ENCODE measurements at regions of chr4 and their contacts with region 1.

Region 1: DNA sequence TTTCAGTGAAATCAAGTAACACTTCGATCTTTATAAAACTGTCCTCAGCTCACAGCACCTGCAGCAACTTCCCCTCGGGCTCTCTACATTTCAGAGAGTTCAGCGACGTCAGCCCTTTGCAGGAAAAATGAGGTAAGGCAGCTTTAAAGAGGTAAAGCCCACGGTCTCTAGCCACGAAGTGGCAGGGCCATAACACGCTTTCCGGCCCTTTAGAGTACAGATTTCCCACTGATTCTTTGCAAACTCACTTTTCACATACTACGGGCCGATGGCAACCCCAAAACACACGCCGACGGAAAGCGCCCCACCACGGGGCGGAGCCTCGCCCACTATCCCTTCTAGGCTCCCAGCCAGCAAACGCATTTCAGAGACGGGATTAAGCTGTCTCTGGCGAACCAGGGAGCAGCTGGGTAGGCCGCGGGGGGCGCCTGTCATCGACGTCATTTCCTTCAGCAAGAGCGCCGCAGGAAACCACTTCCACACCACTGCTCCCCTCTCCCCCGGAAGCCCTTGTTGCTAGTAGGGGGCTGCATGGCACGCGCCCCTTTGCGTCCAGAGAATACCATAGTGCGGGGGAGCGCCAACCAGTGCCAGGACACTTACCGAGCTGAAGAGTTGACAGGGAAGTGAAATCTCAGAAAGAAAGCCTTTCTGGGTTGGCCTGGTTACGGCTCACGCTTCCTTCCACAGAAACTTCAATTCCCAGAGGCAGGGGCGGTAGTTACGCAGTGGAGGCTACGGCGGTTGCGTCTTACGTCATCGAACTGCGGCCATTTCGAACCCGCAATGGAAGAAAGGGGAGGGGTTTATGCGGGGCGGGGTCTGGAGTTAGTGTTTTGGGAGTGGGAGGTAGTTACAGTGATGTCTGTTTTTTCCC is at the start of gene TRMT10A:
- DNase-seq: peak; percentile 98
- ATAC-seq: peak; percentile 97
- H3K4me3 ChIP-seq: peak within 1 kb of the TSS; percentile 78
- H3K27ac ChIP-seq: peak within 1 kb of the TSS; percentile 97
- H3K4me1 ChIP-seq: no peaks in the 10 kb centered on the region
- H3K27me3 ChIP-seq: no peaks in the 10 kb centered on the region
- CTCF ChIP-seq: no peak
- POLR2A ChIP-seq: peak; percentile 83
- RAD21 ChIP-seq: no peak
- total RNA-seq, gene TRMT10A: 4.3 and 8.9 TPM in 2 replicates

Region 2: DNA sequence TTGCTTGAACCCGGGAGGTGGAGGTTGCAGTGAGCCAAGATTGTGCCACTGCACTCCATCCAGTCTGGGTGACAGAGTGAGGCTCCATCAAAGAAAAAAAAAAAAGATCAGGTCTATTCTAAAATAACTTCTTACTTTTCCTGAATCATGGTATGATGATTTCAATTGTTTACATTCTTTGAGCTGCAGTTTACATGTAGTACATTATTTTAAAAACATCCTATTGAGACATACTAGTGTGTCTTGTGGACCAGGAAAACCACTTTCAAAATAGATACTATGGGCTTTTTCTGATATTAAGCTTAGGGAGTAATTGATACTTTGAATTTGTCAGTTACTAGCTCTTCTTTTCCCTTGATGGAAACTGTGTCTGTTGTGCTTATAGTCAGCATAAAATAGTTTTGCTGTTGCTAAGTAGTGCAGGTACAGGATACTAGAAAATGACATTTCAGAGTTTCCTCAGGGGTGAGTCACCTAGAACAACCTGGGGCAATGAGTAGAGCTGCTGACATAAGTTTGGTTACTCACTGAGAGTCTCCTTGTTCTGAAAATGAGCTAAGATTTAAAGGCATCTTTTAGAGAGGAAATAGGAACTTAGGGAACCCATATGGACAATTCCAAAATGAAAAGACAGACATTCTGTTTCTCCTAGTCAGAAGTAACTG is 147.3 kb after region 1 on chr4:
- CTCF ChIA-PET with region 1: no interaction called
- POLR2A ChIA-PET with region 1: no interaction called
- dilution Hi-C with region 1: no loop called
- in situ Hi-C with region 1: no loop called
- intact Hi-C with region 1: loop called (anchors 5 kb)
- DNase-seq: peak; percentile 63
- ATAC-seq: peak; percentile 86
- H3K4me3 ChIP-seq: no peak overlapping the region
- H3K27ac ChIP-seq: peak overlapping the region; percentile 41; the same call in 1 of the 2 replicates
- H3K4me1 ChIP-seq: peaks cover 6% of the 10 kb centered on the region; the same call in 1 of the 2 replicates
- H3K27me3 ChIP-seq: no peaks in the 10 kb centered on the region
- CTCF ChIP-seq: no peak
- POLR2A ChIP-seq: no peak
- RAD21 ChIP-seq: no peak

Region 3: DNA sequence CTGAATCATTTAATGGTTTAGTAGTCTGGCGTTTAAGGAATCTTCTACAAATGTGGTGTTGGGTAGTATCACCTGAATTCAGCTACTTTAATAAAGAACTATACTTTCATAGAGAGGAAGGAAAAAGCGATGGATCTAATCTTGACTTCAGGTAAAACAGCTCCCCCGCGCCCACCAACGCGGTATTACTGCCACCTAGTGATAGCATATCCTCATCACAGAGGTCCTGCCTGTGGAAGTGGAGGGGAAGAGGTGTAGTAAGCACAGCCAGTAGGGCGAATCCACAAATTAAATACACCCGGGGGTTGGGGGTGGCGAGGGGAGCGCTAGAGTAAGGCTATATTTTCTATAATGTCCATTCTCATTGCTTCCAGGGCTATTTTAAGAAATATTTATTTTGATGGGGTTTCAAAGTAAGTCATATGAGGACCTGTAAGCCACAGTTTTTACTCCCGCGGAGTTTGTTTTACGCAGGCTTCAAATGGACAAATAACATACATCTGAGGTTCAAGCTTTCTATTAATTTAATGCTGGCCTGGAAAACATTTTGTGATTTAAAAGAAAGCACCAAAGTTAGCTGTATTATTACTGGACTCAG is 244.8 kb after region 1 on chr4:
- CTCF ChIA-PET with region 1: interaction called, 10 read pairs
- POLR2A ChIA-PET with region 1: no interaction called
- dilution Hi-C with region 1: no loop called
- in situ Hi-C with region 1: loop called (anchors 10 kb)
- intact Hi-C with region 1: loop called (anchors 1 kb)
- DNase-seq: peak; percentile 21
- ATAC-seq: peak; percentile 63
- H3K4me3 ChIP-seq: no peak overlapping the region
- H3K27ac ChIP-seq: no peak overlapping the region
- H3K4me1 ChIP-seq: no peaks in the 10 kb centered on the region
- H3K27me3 ChIP-seq: peaks cover 3% of the 10 kb centered on the region; the same call in 1 of the 2 replicates
- CTCF ChIP-seq: peak; percentile 59
- POLR2A ChIP-seq: no peak
- RAD21 ChIP-seq: peak; percentile 65

Region 4: GRCh38 chr4:99885063-99885664 is 321.6 kb after region 1 on chr4:
- CTCF ChIA-PET with region 1: no interaction called
- POLR2A ChIA-PET with region 1: no interaction called
- dilution Hi-C with region 1: no loop called
- in situ Hi-C with region 1: loop called (anchors 10 kb)
- intact Hi-C with region 1: loop called (anchors 1 kb)
- DNase-seq: peak; percentile 38
- ATAC-seq: no peak
- H3K4me3 ChIP-seq: no peak overlapping the region
- H3K27ac ChIP-seq: no peak overlapping the region
- H3K4me1 ChIP-seq: no peaks in the 10 kb centered on the region
- H3K27me3 ChIP-seq: no peaks in the 10 kb centered on the region
- CTCF ChIP-seq: peak; percentile 45
- POLR2A ChIP-seq: no peak
- RAD21 ChIP-seq: peak; percentile 58

Region 5: DNA sequence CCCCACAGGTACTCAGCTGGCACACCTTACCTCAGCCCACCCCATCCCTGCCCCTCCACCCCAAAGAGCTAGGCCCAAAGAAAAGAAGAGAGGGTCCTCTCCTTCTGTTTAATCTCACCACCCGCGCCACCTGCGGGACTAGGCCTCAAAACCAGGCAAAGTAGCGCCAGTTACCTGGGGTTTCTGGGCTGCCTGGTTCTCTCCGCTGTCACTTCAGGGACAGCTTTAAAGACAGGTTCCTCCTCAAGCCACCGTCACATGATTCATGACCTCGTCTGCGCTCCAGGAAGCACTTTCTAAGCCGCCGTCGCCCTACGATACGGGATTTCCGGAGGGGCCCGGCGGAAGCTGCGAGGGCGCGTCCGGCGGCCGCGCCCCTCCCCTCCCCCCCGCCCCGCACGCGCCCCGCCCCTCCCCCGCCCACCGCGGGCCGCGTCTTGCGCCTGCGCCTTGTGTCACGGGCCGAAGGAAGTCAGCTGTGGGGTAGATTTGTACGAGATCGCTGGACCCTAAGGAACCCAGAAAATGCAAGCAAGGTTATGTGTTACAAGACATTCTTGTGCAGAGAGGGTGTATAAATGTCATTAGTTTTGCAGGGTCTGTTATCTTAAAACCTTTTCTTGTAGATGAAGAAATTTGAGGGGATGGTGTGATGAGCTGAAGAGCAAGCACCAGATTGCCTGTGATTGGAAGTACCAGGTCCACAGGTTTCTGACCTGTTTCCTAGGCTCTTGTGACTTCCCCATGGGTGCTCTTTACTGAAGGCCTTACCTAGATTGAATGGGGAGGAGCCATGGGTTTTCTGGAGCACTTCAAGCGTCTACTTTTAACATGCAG is 330.8 kb after region 1 on chr4 and contains the start of gene LAMTOR3:
- CTCF ChIA-PET with region 1: no interaction called
- POLR2A ChIA-PET with region 1: no interaction called
- dilution Hi-C with region 1: no loop called
- in situ Hi-C with region 1: loop called (anchors 10 kb)
- intact Hi-C with region 1: loop called (anchors 2 kb)
- DNase-seq: peak; percentile 88
- ATAC-seq: peak; percentile 98
- H3K4me3 ChIP-seq: peak within 1 kb of the TSS; percentile 99
- H3K27ac ChIP-seq: peak within 1 kb of the TSS; percentile 96
- H3K4me1 ChIP-seq: peaks cover 4% of the 10 kb centered on the region
- H3K27me3 ChIP-seq: no peaks in the 10 kb centered on the region
- CTCF ChIP-seq: no peak
- POLR2A ChIP-seq: peak; percentile 69
- RAD21 ChIP-seq: no peak
- total RNA-seq, gene LAMTOR3: 35.7 and 56.1 TPM in 2 replicates

Region 6: DNA sequence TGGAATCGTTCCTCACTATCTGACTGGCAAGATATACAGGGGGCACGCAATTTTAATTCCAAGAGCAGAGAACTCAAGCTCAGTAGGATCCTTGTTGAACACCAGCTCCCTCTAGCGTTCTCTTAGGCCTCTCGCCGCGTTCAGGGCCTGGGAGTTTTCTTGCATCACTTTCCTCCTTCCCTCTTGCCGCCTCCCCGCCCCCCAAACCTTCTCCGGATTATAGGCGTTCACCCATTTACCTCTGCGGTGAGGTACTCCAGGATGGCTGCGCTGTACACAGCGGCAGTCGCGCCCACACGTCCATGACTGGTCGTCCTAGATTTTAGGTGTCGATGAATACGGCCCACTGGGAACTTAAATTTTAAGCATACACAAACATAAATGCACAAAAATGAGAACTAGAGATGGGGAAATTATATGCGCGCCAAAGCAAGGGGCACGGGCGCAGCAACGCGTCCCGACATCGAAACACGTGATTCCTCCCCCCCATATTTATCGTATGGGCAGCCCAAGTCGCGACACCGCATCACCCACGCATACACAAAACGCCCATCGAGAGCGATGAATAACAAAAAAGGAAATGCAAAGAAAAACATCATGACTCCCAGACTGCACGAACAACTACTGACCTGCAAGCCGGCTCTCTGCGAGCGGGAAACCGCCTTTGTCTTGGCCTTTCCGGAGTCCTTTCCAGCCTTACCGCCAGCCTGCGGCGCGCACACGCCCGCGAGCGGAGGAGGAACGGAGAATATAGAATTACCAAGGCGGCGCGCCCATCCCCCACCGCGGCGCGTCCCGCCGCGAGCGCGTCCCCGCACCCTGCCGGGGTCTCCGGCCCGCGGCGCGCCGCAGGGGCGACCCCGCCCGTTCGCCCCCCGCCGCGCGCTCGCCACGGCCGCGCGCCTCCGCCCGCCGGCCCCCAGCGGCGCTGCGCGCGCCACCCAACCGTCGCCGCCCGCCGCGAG is 385.8 kb after region 1 on chr4:
- CTCF ChIA-PET with region 1: interaction called, 4 read pairs
- POLR2A ChIA-PET with region 1: interaction called, 3 read pairs
- dilution Hi-C with region 1: no loop called
- in situ Hi-C with region 1: loop called (anchors 10 kb)
- intact Hi-C with region 1: loop called (anchors 1 kb)
- DNase-seq: peak; percentile 93
- ATAC-seq: peak; percentile 8
- H3K4me3 ChIP-seq: peak overlapping the region; percentile 70
- H3K27ac ChIP-seq: peak overlapping the region; percentile 93
- H3K4me1 ChIP-seq: peaks cover 4% of the 10 kb centered on the region; the same call in 1 of the 2 replicates
- H3K27me3 ChIP-seq: no peaks in the 10 kb centered on the region
- CTCF ChIP-seq: peak; percentile 91
- POLR2A ChIP-seq: no peak
- RAD21 ChIP-seq: peak; percentile 71

Region 7: GRCh38 chr4:100060765-100061416 is 497.3 kb after region 1 on chr4:
- CTCF ChIA-PET with region 1: no interaction called
- POLR2A ChIA-PET with region 1: no interaction called
- dilution Hi-C with region 1: no loop called
- in situ Hi-C with region 1: loop called (anchors 25 kb)
- intact Hi-C with region 1: loop called (anchors 2 kb)
- DNase-seq: no peak
- ATAC-seq: no peak
- H3K4me3 ChIP-seq: no peak overlapping the region
- H3K27ac ChIP-seq: no peak overlapping the region
- H3K4me1 ChIP-seq: peaks cover 5% of the 10 kb centered on the region
- H3K27me3 ChIP-seq: no peaks in the 10 kb centered on the region
- CTCF ChIP-seq: no peak
- POLR2A ChIP-seq: no peak
- RAD21 ChIP-seq: no peak

Measured in IMR-90 (cell line).